GM12878 (cell line): ENCODE measurements at regions of chr3 and their contacts with region 1.

Region 1: DNA sequence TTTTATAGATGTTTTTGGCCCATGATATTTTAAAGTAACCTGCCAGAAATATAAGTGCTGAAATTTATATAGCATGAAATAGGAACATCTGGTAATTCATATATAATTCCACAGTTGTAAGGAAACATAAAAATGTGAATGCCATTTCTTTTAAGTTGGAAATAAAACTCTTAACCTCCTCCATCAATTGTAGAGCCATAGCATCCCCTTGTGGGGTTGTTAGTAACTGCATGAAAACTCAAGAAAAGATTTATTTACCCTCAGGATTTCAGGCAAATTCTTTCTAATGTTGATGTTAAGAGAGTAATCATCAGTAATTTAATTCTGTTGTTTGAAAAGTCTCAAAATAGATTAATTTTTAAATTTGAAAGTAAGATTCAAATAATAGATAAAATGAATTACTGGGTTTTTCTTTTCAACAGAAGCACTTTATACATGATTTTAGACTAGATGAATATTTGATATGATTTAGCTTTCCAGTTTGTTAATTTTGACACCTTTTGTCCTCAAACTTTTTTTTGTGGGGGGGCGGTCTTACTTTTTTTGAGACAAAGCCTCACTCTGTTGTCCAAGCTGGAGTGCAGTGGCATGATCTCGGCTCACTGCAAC is 74.7 kb downstream of the RASA2 start:
- DNase-seq: no peak
- ATAC-seq: peak; percentile 45; the same call in 2 of the 3 replicates
- H3K4me3 ChIP-seq: no peak overlapping the region
- H3K27ac ChIP-seq: no peak overlapping the region
- H3K4me1 ChIP-seq: no peaks in the 10 kb centered on the region
- H3K27me3 ChIP-seq: no peaks in the 10 kb centered on the region
- CTCF ChIP-seq: peak; percentile 94 to 96 (median 94); a peak in 5 of 6 replicates
- EP300 ChIP-seq: no peak
- POLR2A ChIP-seq: no peak
- RAD21 ChIP-seq: peak; percentile 100

Region 2: DNA sequence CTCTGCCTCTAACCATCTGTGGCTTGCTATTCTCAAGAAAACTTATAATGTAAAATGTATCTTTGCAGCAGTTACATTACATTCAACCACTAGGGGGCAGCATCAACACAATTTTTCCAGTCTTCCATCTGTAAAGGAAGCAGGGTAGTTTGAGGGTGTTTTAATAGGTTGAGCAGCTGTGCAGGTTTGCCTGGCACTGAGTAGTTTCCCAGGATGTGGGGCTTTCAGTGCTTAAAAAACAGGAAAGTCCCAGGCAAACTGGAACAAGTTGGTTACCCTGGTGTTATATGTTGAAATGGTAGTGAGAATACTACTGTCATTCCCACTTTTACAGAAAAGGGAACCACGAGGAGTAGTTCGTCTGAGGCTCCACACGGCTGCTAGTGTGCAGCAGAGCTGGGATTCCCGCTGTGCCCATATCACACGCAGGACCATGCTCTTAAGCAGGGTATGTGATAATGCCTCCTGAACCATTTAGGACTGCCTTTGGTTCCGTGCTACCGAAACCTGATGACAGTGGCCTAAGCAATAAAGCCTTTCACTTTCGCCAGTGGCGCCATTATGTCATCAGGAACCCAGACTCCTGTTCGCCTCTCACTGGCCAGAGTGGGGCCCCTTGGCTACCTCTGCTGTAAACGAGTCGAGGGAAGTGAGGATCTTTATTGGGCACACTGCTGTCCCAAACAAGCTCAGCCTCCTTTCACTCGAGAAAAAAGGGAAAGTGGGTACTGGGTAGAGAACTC is 257.9 kb before region 1 on chr3:
- CTCF ChIA-PET with region 1: interaction called, 72 read pairs
- POLR2A ChIA-PET with region 1: no interaction called
- RAD21 ChIA-PET with region 1: interaction called, 22 read pairs
- SMC1A ChIA-PET with region 1: interaction called, 30 read pairs
- in situ Hi-C with region 1: loop called (anchors 5 kb)
- intact Hi-C with region 1: loop called (anchors 2 kb)
- DNase-seq: peak; percentile 64
- ATAC-seq: peak; percentile 93
- H3K4me3 ChIP-seq: no peak overlapping the region
- H3K27ac ChIP-seq: no peak overlapping the region
- H3K4me1 ChIP-seq: peaks cover 8% of the 10 kb centered on the region
- H3K27me3 ChIP-seq: no peaks in the 10 kb centered on the region
- CTCF ChIP-seq: peak; percentile 55 to 78 (median 70); a peak in 5 of 6 replicates
- EP300 ChIP-seq: no peak
- POLR2A ChIP-seq: no peak
- RAD21 ChIP-seq: peak; percentile 89

Region 3: DNA sequence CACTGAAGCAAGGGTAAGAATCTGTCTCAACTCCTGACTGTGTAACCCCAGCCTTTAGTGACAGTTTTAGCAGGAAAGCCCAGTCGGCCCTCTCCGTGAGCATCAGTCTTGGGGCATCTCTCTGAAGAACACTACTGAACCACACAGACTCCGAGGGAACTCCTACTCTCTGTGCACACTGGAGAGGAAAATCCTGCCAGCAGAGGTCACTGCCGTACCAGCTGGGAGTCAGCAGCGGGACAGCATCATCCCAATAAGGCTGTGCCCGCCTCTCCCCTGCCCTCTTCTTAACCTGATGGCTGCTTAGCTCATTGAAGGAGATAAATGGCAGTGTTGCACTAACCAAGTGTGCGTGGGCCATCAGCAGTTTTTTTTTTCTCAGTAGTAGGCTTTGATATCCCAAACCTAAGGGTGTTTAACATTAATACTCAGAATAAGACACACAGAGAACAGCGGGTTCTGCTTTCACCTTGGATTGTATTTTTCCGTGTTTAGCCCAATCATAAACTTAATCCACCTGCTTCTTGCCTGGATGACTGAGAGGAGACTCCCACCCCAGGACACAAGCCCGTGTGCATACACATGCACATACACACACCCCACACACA is 101.3 kb before region 1 on chr3:
- CTCF ChIA-PET with region 1: interaction called, 306 read pairs
- POLR2A ChIA-PET with region 1: interaction called, 3 read pairs
- RAD21 ChIA-PET with region 1: interaction called, 44 read pairs
- SMC1A ChIA-PET with region 1: interaction called, 103 read pairs
- in situ Hi-C with region 1: loop called (anchors 5 kb)
- intact Hi-C with region 1: loop called (anchors 1 kb)
- DNase-seq: no peak
- ATAC-seq: peak; percentile 100
- H3K4me3 ChIP-seq: no peak overlapping the region
- H3K27ac ChIP-seq: no peak overlapping the region
- H3K4me1 ChIP-seq: peaks cover 3% of the 10 kb centered on the region; the same call in 1 of the 2 replicates
- H3K27me3 ChIP-seq: no peaks in the 10 kb centered on the region
- CTCF ChIP-seq: peak; percentile 79 to 96 (median 87)
- EP300 ChIP-seq: no peak
- POLR2A ChIP-seq: no peak
- RAD21 ChIP-seq: peak; percentile 89

Region 4: DNA sequence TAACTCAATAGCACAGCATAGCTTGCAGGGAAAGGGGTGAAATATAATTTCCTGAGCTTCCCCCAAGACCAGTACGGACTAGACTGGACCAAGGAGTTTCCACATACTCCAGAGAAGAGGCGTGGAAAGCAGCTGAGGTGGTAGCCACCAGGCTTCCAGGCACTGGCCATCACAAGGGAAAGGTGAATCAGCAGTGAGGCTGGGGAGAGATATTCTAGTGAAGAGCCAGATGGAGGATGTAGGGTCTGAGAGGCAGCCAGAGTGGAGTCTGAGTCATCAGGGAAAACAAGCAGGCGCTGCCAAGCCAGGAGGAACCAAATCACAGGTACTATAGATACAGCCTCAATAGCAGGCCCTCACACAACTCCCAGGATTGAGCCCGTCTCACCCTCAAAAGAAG is 84.3 kb before region 1 on chr3:
- CTCF ChIA-PET with region 1: interaction called, 36 read pairs
- POLR2A ChIA-PET with region 1: no interaction called
- RAD21 ChIA-PET with region 1: interaction called, 20 read pairs
- SMC1A ChIA-PET with region 1: interaction called, 24 read pairs
- in situ Hi-C with region 1: no loop called
- intact Hi-C with region 1: loop called (anchors 1 kb)
- DNase-seq: no peak
- ATAC-seq: no peak
- H3K4me3 ChIP-seq: no peak overlapping the region
- H3K27ac ChIP-seq: no peak overlapping the region
- H3K4me1 ChIP-seq: no peaks in the 10 kb centered on the region
- H3K27me3 ChIP-seq: peaks cover 0 to 2% of the 10 kb centered on the region in 2 experiments; a peak in 1 of 4 replicates
- CTCF ChIP-seq: no peak
- EP300 ChIP-seq: no peak
- POLR2A ChIP-seq: no peak
- RAD21 ChIP-seq: no peak

Region 5: DNA sequence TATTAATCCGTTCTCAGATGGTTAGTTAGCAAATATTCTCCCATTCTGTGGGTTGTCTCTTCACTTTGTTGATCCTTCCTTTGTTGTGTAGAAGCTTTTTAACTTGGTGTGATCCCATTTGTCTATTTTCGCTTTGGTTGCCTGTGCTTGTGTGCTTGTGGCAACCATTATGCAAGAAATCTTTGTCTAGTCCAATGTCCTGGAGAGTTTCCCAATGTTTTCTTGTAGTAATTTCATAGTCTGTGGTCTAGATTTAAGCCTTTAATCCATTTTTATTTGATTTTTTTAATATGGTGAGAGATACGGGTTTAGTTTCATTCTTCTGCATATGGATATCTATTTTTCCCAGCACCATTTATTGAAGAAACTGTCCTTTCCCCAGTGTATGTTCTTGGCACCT is 14.9 kb before region 1 on chr3:
- CTCF ChIA-PET with region 1: interaction called, 13 read pairs
- POLR2A ChIA-PET with region 1: no interaction called
- RAD21 ChIA-PET with region 1: interaction called, 6 read pairs
- SMC1A ChIA-PET with region 1: interaction called, 12 read pairs
- in situ Hi-C with region 1: no loop called
- intact Hi-C with region 1: no loop called
- DNase-seq: no peak
- ATAC-seq: no peak
- H3K4me3 ChIP-seq: no peak overlapping the region
- H3K27ac ChIP-seq: no peak overlapping the region
- H3K4me1 ChIP-seq: no peaks in the 10 kb centered on the region
- H3K27me3 ChIP-seq: no peaks in the 10 kb centered on the region
- CTCF ChIP-seq: no peak
- EP300 ChIP-seq: no peak
- POLR2A ChIP-seq: no peak
- RAD21 ChIP-seq: no peak

Region 6: DNA sequence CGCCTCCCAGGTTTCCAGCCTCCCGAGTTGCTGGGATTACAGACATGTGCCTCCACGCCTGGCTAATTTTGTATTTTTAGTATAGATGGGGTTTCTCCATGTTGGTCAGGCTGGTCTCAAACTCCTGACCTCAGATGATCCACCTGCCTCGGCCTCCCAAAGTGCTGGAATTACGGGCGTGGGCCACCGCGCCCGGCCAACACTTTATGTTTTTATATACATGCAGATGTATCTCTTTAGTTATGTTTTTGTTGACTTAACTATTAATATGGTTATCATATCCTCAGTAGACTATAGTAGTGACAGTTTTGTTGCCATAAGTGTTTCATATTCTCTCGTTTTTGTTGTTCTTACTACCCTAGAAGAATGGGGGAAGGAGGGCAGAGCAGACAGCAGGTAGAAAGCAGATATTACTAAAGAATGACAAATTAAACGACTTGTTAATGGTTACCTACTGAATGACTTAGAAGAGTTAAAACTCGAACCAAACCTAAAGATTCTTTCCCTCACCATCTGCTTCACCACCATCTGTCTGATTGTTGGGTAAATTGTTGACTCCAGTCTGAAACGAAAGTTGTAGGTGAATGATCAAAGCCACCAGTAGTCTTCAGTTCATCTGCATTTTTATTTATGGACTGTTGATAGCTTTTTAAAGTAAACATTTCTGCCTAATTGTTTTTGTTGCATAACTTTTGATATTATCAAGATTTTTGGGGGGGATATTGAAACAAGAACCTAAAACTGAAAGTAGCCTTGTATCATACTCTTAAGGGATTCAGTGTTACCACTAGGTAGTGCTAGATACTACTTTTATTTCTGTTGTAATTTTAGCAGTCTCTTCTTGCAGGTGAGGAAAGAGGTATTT is 14.6 kb after region 1 on chr3:
- CTCF ChIA-PET with region 1: interaction called, 23 read pairs
- POLR2A ChIA-PET with region 1: no interaction called
- RAD21 ChIA-PET with region 1: interaction called, 4 read pairs
- SMC1A ChIA-PET with region 1: interaction called, 3 read pairs
- in situ Hi-C with region 1: no loop called
- intact Hi-C with region 1: no loop called
- DNase-seq: no peak
- ATAC-seq: peak; percentile 93
- H3K4me3 ChIP-seq: no peak overlapping the region
- H3K27ac ChIP-seq: no peak overlapping the region
- H3K4me1 ChIP-seq: peaks cover 5% of the 10 kb centered on the region; the same call in 1 of the 2 replicates
- H3K27me3 ChIP-seq: no peaks in the 10 kb centered on the region
- CTCF ChIP-seq: peak; percentile 39 to 47 (median 42); a peak in 4 of 6 replicates
- EP300 ChIP-seq: no peak
- POLR2A ChIP-seq: no peak
- RAD21 ChIP-seq: peak; percentile 53